ENCODE measurements at regions of chr1 and their contacts with region 1.

Region 1: GRCh38 chr1:154479764-154480421 is 22.1 kb upstream of the TDRD10 start:
- DNase-seq: peak; percentile 59
- H3K4me3 Mint-ChIP-seq: no peak overlapping the region
- H3K27ac Mint-ChIP-seq: no peak overlapping the region
- H3K4me1 Mint-ChIP-seq: peaks cover 14% of the 10 kb centered on the region
- H3K27me3 Mint-ChIP-seq: peaks cover 7% of the 10 kb centered on the region

Region 2: DNA sequence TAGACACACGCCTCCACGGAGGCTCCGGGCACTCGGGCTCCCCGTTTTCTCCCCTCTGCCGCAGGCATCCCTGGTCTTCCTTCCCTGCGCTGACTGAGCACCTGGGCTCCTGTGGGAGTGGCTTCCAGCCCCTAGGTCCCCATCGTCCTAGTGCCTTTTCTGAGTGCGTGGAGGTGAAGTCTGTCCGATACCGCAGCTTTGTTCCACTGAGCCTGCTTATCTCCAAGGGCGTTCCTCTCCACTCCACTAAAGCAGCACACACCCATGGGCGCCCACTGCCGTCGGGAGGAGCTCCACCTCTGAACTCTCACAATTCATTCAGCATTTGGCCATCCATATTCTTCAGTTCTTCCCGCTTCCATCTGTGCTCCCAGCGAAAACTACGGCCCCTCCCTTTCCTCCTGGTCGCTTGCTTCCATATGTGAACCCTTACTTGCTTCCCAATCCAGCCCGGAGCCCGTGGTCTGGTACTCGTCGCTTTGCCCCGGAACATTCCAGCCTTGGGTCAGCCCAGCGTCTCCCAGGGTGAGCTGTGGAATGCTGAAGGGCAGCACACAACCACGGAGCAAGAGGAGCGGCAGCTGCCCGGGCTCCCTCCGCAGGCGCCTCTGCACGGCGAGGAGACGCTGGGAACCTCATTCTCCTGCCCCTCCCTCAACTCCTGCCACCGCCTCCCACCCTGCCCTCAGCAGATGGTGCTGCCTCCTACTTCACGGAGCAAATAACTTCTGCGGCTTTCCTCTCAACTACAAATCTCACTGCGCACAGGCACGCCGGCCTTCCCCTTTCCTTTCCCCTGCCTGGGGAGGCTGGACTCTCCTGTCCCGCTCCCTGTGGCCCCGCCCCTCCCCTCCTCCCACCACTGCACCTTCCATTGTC is 127.1 kb before region 1 on chr1:
- intact Hi-C with region 1: loop called (anchors 5 kb)
- DNase-seq: no peak
- H3K4me3 Mint-ChIP-seq: peak overlapping the region; percentile 77
- H3K27ac Mint-ChIP-seq: peak overlapping the region; percentile 29
- H3K4me1 Mint-ChIP-seq: peaks cover 22% of the 10 kb centered on the region
- H3K27me3 Mint-ChIP-seq: peaks cover 5% of the 10 kb centered on the region

Region 3: GRCh38 chr1:154398141-154398540 is 81.8 kb before region 1 on chr1:
- intact Hi-C with region 1: no loop called
- DNase-seq: no peak
- H3K4me3 Mint-ChIP-seq: no peak overlapping the region
- H3K27ac Mint-ChIP-seq: no peak overlapping the region
- H3K4me1 Mint-ChIP-seq: peaks cover 10% of the 10 kb centered on the region
- H3K27me3 Mint-ChIP-seq: peaks cover 2% of the 10 kb centered on the region

Region 4: DNA sequence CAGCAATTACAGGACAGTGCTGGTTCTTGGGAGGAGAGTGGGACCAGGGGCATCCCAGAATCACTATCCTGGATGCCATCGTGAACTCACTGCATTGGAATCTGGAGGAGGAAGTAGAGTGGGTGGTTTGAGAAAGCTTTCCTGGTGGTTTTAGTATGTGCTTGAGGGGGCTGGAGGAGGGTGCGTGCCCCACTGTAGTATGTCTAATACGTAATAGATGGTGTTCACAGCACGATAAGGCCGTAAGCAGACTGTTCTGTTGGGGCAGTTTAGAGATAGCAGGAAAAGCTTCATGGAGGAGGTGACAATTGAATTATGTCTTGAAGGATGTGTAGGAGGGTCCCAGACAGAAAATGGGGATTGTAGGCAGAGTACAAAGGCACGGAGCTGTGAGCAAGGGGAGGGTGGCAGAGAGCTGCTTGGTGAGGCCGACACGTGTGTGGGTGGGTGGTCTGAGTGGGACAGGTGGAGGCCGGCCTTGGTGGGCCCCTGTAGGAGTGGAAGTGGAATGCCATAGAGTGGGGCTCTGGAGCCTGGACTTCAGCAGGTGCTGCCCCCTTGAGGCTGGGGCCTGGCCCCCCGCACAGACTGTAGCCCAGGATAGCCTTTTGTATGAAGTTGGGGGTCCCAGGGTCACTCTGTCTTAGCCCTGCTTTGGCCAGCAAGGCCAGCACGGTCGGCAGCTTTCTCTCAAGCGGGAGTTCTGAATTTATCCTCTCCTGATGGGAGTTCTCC is 37.7 kb before region 1 on chr1:
- intact Hi-C with region 1: loop called (anchors 5 kb)
- DNase-seq: no peak
- H3K4me3 Mint-ChIP-seq: no peak overlapping the region
- H3K27ac Mint-ChIP-seq: no peak overlapping the region
- H3K4me1 Mint-ChIP-seq: peaks cover 66% of the 10 kb centered on the region
- H3K27me3 Mint-ChIP-seq: peaks cover 9% of the 10 kb centered on the region

Region 5: GRCh38 chr1:154493276-154493675 is 13.4 kb after region 1 on chr1:
- intact Hi-C with region 1: no loop called
- DNase-seq: no peak
- H3K4me3 Mint-ChIP-seq: peak overlapping the region; percentile 5
- H3K27ac Mint-ChIP-seq: no peak overlapping the region
- H3K4me1 Mint-ChIP-seq: peaks cover 25% of the 10 kb centered on the region
- H3K27me3 Mint-ChIP-seq: peaks cover 17% of the 10 kb centered on the region

Region 6: DNA sequence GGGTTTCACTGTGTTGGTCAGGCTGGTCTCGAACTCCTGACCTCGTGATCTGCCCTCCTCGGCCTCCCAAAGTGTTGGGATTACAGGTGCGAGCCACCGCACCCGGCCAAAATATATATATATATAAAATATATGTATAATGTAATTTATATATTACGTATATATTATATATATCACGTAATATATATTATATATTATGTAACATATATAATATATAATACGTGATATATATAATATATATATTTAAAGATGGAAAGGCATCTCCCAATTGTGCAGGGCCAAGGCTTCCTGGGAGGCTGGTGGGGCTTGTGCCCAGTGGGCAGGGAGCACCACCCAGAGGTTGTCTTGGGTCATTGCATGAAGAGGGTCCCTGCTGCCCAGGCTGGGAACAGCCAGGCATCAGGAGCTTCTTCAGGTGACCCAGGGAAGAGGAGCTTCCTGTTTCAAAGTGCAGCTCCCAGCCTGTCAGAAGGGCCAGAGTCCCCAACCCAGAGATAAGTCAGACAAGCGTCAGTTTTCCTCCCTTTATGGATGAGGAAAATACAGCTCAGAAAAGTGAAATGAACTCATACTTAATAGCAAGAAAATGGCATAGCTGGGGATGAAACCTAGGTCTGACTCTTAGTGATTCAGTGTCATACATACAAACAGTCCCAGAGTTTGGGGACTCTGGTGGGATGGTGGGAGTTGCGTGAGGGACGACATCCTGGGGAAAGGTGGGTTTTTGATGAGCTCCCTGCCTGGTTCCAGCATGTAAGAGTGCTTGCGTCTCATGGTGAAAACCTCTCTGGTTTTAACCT is 66.6 kb after region 1 on chr1:
- intact Hi-C with region 1: loop called (anchors 1 kb)
- DNase-seq: peak; percentile 19
- H3K4me3 Mint-ChIP-seq: no peak overlapping the region
- H3K27ac Mint-ChIP-seq: no peak overlapping the region
- H3K4me1 Mint-ChIP-seq: peaks cover 6% of the 10 kb centered on the region
- H3K27me3 Mint-ChIP-seq: peaks cover 6% of the 10 kb centered on the region

Region 7: GRCh38 chr1:154669464-154670282 is 189.8 kb after region 1 on chr1:
- intact Hi-C with region 1: loop called (anchors 5 kb)
- DNase-seq: peak; percentile 64
- H3K4me3 Mint-ChIP-seq: no peak overlapping the region
- H3K27ac Mint-ChIP-seq: no peak overlapping the region
- H3K4me1 Mint-ChIP-seq: peaks cover 17% of the 10 kb centered on the region
- H3K27me3 Mint-ChIP-seq: peaks cover 2% of the 10 kb centered on the region

Region 8: GRCh38 chr1:154878371-154879022 is 398.6 kb after region 1 on chr1:
- intact Hi-C with region 1: loop called (anchors 5 kb)
- DNase-seq: peak; percentile 64
- H3K4me3 Mint-ChIP-seq: no peak overlapping the region
- H3K27ac Mint-ChIP-seq: no peak overlapping the region
- H3K4me1 Mint-ChIP-seq: peaks cover 18% of the 10 kb centered on the region
- H3K27me3 Mint-ChIP-seq: peaks cover 7% of the 10 kb centered on the region

Region 9: GRCh38 chr1:154936555-154937084 is 456.7 kb after region 1 on chr1 and contains the start of gene PMVK:
- intact Hi-C with region 1: loop called (anchors 5 kb)
- DNase-seq: peak; percentile 92
- H3K4me3 Mint-ChIP-seq: peak within 1 kb of the TSS; percentile 93
- H3K27ac Mint-ChIP-seq: peak within 1 kb of the TSS; percentile 95
- H3K4me1 Mint-ChIP-seq: peaks cover 53% of the 10 kb centered on the region
- H3K27me3 Mint-ChIP-seq: no peaks in the 10 kb centered on the region
- total RNA-seq, gene PMVK: 42.5 and 43.3 TPM in 2 replicates